ENCODE measurements at regions of chr1 and their contacts with region 1.

Region 1: GRCh38 chr1:201016211-201016651 is 7.3 kb downstream of the KIF21B start:
- DNase-seq: no peak
- H3K4me3 Mint-ChIP-seq: no peak overlapping the region
- H3K27ac Mint-ChIP-seq: peak overlapping the region; percentile 82
- H3K4me1 Mint-ChIP-seq: peaks cover 92% of the 10 kb centered on the region
- H3K27me3 Mint-ChIP-seq: no peaks in the 10 kb centered on the region

Region 2: GRCh38 chr1:200971955-200972711 is 44.1 kb before region 1 on chr1:
- CTCF ChIA-PET with region 1: interaction called, 28 read pairs
- intact Hi-C with region 1: loop called (anchors 1 kb)
- DNase-seq: peak; percentile 76
- H3K4me3 Mint-ChIP-seq: no peak overlapping the region
- H3K27ac Mint-ChIP-seq: no peak overlapping the region
- H3K4me1 Mint-ChIP-seq: peaks cover 4% of the 10 kb centered on the region
- H3K27me3 Mint-ChIP-seq: no peaks in the 10 kb centered on the region

Measured in activated naive CD4-positive, alpha-beta T cell treated with anti-CD3 and anti-CD28 coated beads for 36 hours (primary cell).